CD4-positive, alpha-beta T cell (primary cell): ENCODE measurements at regions of chr9 and their contacts with region 1.

Region 1: DNA sequence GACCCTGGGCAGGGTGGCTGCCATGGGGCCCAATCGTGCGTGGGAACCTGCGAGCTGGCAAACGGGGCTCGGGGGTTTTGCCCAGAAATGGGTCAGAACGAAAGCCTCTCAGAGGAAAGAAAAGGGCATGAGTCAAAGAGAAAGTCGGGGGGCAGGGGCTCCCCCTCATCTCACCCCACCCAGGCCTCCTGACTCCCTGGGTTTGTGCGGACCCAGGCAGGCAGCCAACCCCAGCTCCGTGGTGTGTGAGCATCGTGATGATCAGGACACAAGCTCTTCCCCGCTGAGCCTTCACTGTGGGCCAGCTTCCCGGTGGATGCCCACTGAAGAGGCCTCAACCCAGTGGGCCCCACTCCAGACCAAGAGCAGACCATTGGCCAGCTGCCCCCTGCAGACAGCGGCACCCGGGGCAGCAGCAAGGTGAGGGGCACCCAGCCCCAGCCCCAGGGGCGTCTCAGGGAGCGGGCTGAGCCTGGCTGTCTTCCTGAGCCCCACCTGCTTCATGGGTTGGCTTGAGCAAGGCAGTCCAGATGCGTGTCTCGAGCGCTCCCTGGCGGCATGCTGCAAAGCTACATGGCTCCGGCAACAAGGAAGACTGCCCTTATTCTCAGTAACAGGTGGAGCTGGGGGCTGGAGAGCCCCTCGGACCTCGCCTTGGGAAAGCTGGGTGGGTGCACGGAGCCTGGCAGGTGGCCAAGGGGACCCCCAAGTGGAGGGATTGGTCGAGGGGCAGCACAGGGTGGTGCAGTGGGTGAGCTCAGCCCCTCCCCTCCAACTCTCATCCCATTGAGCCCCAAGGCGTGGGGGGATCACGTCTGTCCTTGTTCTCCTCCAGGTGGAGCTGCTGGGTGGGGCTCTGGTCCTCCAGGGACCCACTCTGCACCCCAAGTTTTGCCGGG is 3.2 kb upstream of the FUT7 start:
- DNase-seq: peak; percentile 80 to 95 (median 84)
- ATAC-seq: peak; percentile 88
- H3K4me3 ChIP-seq: peak overlapping the region; percentile 51
- H3K4me3 Mint-ChIP-seq: peak overlapping the region; percentile 68
- H3K27ac ChIP-seq: peak overlapping the region in 1 of 2 donors; percentile 60
- H3K27ac Mint-ChIP-seq: peak overlapping the region; percentile 64
- H3K4me1 ChIP-seq: peaks cover 50% of the 10 kb centered on the region
- H3K4me1 Mint-ChIP-seq: peaks cover 41% of the 10 kb centered on the region
- H3K27me3 ChIP-seq: no peaks in the 10 kb centered on the region
- H3K27me3 Mint-ChIP-seq: no peaks in the 10 kb centered on the region
- CTCF ChIP-seq: peak; percentile 95

Region 2: GRCh38 chr9:136849038-136849959 is 185.8 kb before region 1 on chr9 and contains the start of gene PHPT1:
- CTCF ChIA-PET with region 1: interaction called, 20 read pairs
- POLR2A ChIA-PET with region 1: no interaction called
- intact Hi-C with region 1: loop called in 1 of 2 experiments (anchors 2 kb)
- DNase-seq: peak; percentile 89 to 98 (median 94)
- ATAC-seq: peak; percentile 92
- H3K4me3 ChIP-seq: peak within 1 kb of the TSS; percentile 84
- H3K4me3 Mint-ChIP-seq: peak within 1 kb of the TSS; percentile 97
- H3K27ac ChIP-seq: peak within 1 kb of the TSS in 1 of 2 donors; percentile 60
- H3K27ac Mint-ChIP-seq: peak within 1 kb of the TSS; percentile 91
- H3K4me1 ChIP-seq: peaks cover 45% of the 10 kb centered on the region
- H3K4me1 Mint-ChIP-seq: peaks cover 10% of the 10 kb centered on the region
- H3K27me3 ChIP-seq: peaks cover 15 to 16% of the 10 kb centered on the region in 2 experiments
- H3K27me3 Mint-ChIP-seq: peaks cover 21% of the 10 kb centered on the region
- CTCF ChIP-seq: no peak
- total RNA-seq, gene PHPT1: 13.6 to 17.8 TPM

Region 3: DNA sequence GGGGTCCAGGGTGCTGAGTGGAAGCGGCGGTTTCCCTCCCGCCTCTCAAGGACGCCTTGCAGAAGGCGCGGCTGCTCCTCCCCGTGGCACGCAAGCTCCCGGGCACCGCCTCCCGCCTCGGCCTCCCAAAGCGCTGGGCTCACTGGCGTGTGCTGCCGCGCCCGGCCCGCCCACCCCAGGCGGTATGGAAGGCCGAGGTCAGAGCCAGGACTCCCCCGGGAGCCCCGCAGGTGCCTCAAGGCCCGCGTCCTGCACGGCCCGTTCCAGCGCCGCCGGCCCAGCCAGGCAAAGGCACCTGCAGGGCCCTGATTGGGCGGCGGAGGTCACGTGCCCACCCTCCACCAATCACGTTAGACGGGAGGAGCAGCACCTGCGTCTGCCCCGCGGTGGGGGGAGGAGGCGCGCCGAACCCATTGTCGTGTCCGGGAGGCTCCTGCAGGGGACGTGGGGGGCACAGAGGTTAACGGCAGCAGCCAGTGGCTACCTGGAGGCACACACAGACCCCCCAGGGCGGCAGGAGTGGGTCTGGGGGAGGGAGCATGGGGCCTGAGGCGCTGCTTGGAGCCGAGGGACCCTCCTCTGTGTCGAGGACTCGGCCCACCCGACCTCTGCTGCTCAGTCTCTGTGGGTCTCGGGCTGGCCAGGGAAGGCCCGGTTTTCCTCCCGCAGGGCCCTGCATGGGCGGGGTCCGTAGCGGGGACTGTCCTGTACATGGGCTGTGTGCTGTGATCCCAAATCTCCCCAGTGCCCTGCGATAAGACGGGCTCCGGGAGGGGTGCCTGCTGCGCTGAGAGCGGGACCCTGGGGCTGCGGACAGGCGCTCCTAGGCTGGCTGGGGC is 85.1 kb before region 1 on chr9:
- CTCF ChIA-PET with region 1: interaction called, 13 read pairs
- POLR2A ChIA-PET with region 1: interaction called, 3 read pairs
- intact Hi-C with region 1: no loop called
- DNase-seq: peak; percentile 93 to 97 (median 96)
- ATAC-seq: peak; percentile 97
- H3K4me3 ChIP-seq: peak overlapping the region; percentile 69
- H3K4me3 Mint-ChIP-seq: peak overlapping the region; percentile 83
- H3K27ac ChIP-seq: peak overlapping the region; percentile 56 to 75
- H3K27ac Mint-ChIP-seq: peak overlapping the region; percentile 86
- H3K4me1 ChIP-seq: peaks cover 38% of the 10 kb centered on the region
- H3K4me1 Mint-ChIP-seq: peaks cover 5% of the 10 kb centered on the region
- H3K27me3 ChIP-seq: no peaks in the 10 kb centered on the region
- H3K27me3 Mint-ChIP-seq: no peaks in the 10 kb centered on the region
- CTCF ChIP-seq: peak; percentile 42

Region 4: GRCh38 chr9:137000177-137000883 is 34.8 kb before region 1 on chr9:
- CTCF ChIA-PET with region 1: interaction called, 9 read pairs
- POLR2A ChIA-PET with region 1: no interaction called
- intact Hi-C with region 1: loop called in 1 of 2 experiments (anchors 2 kb)
- DNase-seq: peak in 3 of 14 experiments; percentile 56 to 70 (median 58)
- ATAC-seq: peak; percentile 31
- H3K4me3 ChIP-seq: no peak overlapping the region
- H3K4me3 Mint-ChIP-seq: peak overlapping the region; percentile 30
- H3K27ac ChIP-seq: no peak overlapping the region
- H3K27ac Mint-ChIP-seq: peak overlapping the region; percentile 53
- H3K4me1 ChIP-seq: peaks cover 57% of the 10 kb centered on the region
- H3K4me1 Mint-ChIP-seq: peaks cover 28% of the 10 kb centered on the region
- H3K27me3 ChIP-seq: peaks cover 0 to 4% of the 10 kb centered on the region in 2 experiments
- H3K27me3 Mint-ChIP-seq: peaks cover 10% of the 10 kb centered on the region
- CTCF ChIP-seq: no peak

Region 5: DNA sequence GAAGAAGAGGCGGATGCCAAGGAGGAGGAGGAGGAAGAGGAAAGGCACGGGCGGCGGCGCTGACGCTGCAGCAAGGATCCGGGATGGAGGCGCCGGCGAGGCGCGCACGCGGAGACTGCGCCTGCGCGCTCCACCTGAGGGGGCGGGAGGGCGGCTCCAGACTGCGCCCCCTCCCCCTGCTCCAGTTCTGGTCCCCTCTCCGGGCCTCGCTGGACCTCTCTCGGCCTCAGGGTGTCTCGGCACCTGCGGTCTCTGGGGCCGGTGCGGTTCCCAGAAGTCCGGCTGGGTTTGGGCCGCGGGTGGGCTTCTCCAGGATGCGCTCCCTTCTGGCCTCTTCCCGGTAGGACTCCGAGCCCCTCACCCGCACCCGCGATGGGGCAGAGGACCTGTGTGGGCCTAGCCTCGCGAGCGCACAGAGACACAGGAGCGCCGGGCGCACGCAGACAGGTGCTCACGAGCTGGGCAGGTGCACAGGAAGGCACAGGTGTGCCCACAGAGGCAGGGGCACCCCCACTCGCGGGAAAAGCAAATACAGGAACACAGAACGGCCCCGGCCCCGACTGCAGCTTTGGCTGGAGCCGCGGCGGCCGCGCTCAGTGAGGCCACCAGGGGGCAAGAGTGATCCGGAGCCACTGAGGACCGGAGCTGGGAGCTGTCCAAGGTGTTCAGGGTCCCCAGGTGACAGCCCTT is 11.1 kb after region 1 on chr9 and contains the start of gene NPDC1:
- CTCF ChIA-PET with region 1: interaction called, 23 read pairs
- POLR2A ChIA-PET with region 1: interaction called, 6 read pairs
- intact Hi-C with region 1: no loop called
- DNase-seq: peak; percentile 67 to 90 (median 75)
- ATAC-seq: peak; percentile 87
- H3K4me3 ChIP-seq: peak within 1 kb of the TSS; percentile 55
- H3K4me3 Mint-ChIP-seq: peak within 1 kb of the TSS; percentile 51
- H3K27ac ChIP-seq: no peak within 1 kb of the TSS
- H3K27ac Mint-ChIP-seq: no peak within 1 kb of the TSS
- H3K4me1 ChIP-seq: peaks cover 44% of the 10 kb centered on the region
- H3K4me1 Mint-ChIP-seq: no peaks in the 10 kb centered on the region
- H3K27me3 ChIP-seq: peaks cover 68 to 69% of the 10 kb centered on the region in 2 experiments
- H3K27me3 Mint-ChIP-seq: peaks cover 44% of the 10 kb centered on the region
- CTCF ChIP-seq: peak; percentile 77
- total RNA-seq, gene NPDC1: 15.3 to 16.0 TPM

Region 6: GRCh38 chr9:137070201-137070905 is 35.2 kb after region 1 on chr9 and contains the start of gene SAPCD2:
- CTCF ChIA-PET with region 1: interaction called, 13 read pairs
- POLR2A ChIA-PET with region 1: interaction called, 5 read pairs
- intact Hi-C with region 1: no loop called
- DNase-seq: peak; percentile 68 to 94 (median 78)
- ATAC-seq: peak; percentile 88
- H3K4me3 ChIP-seq: peak within 1 kb of the TSS; percentile 45
- H3K4me3 Mint-ChIP-seq: peak within 1 kb of the TSS; percentile 82
- H3K27ac ChIP-seq: no peak within 1 kb of the TSS
- H3K27ac Mint-ChIP-seq: peak within 1 kb of the TSS; percentile 24
- H3K4me1 ChIP-seq: peaks cover 28% of the 10 kb centered on the region
- H3K4me1 Mint-ChIP-seq: peaks cover 16% of the 10 kb centered on the region
- H3K27me3 ChIP-seq: peaks cover 0 to 8% of the 10 kb centered on the region in 2 experiments
- H3K27me3 Mint-ChIP-seq: peaks cover 4% of the 10 kb centered on the region
- CTCF ChIP-seq: no peak
- total RNA-seq, gene SAPCD2: 0.17 to 0.19 TPM

Region 7: DNA sequence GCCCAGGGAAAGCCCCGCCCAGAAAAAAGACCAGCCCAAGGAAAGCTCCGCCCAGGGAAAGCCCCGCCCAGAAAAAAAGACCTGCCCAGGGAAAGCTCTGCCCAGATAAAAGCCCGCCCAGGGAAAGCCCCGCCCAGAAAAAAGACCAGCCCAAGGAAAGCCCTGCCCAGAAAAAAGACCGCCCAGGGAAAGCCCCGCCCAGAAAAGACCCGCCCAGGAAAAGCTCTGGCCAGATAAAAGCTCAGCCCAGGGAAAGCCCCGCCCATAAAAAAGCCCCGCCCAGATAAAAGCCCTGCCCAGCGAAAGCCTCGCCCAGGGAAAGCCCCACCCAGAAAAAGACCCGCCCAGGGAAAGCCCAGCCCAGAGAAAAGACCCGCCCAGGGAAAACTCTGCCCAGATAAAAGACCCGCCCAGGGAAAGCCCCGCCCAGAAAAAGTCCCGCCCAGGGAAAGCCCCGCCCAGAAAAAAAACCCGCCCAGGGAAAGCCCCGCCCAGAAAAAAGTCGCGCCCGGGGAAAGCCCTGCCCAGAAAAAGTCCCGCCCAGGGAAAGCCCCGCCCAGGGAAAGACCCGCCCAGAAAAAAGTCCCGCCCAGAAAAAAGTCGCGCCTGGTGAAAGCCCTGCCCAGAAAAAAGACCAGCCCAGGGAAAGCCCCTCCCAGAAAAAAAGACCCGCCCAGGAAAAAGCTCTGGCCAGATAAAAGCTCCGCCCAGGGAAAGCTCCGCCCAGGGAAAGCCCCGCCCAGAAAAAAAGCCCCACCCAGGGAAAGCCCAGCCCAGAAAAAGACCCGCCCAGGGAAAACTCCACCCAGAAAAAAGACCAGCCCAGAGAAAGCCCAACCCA is 115.7 kb after region 1 on chr9:
- CTCF ChIA-PET with region 1: no interaction called
- POLR2A ChIA-PET with region 1: no interaction called
- intact Hi-C with region 1: no loop called
- DNase-seq: peak in 2 of 14 experiments; percentile 70 to 75
- ATAC-seq: no peak
- H3K4me3 ChIP-seq: no peak overlapping the region
- H3K4me3 Mint-ChIP-seq: no peak overlapping the region
- H3K27ac ChIP-seq: no peak overlapping the region
- H3K27ac Mint-ChIP-seq: no peak overlapping the region
- H3K4me1 ChIP-seq: peaks cover 5% of the 10 kb centered on the region
- H3K4me1 Mint-ChIP-seq: no peaks in the 10 kb centered on the region
- H3K27me3 ChIP-seq: peaks cover 9 to 10% of the 10 kb centered on the region in 2 experiments
- H3K27me3 Mint-ChIP-seq: peaks cover 15% of the 10 kb centered on the region
- CTCF ChIP-seq: no peak

Region 8: GRCh38 chr9:137492464-137493162 is 457.5 kb after region 1 on chr9:
- CTCF ChIA-PET with region 1: no interaction called
- POLR2A ChIA-PET with region 1: no interaction called
- intact Hi-C with region 1: no loop called
- DNase-seq: peak in 4 of 14 experiments; percentile 12 to 56 (median 24)
- ATAC-seq: peak; percentile 77
- H3K4me3 ChIP-seq: no peak overlapping the region
- H3K4me3 Mint-ChIP-seq: no peak overlapping the region
- H3K27ac ChIP-seq: no peak overlapping the region
- H3K27ac Mint-ChIP-seq: no peak overlapping the region
- H3K4me1 ChIP-seq: no peaks in the 10 kb centered on the region
- H3K4me1 Mint-ChIP-seq: peaks cover 9% of the 10 kb centered on the region
- H3K27me3 ChIP-seq: no peaks in the 10 kb centered on the region
- H3K27me3 Mint-ChIP-seq: no peaks in the 10 kb centered on the region
- CTCF ChIP-seq: no peak